ENCODE measurements at regions of chr22 and their contacts with region 1.

Region 1: GRCh38 chr22:38733329-38733723 is 22.5 kb downstream of the SUN2 start:
- DNase-seq: peak; percentile 29 to 60
- ATAC-seq: peak; percentile 72 to 83
- H3K4me3 ChIP-seq: no peak overlapping the region
- H3K27ac ChIP-seq: no peak overlapping the region
- H3K4me1 ChIP-seq: no peaks in the 10 kb centered on the region
- CTCF ChIP-seq: peak; percentile 56
- EP300 ChIP-seq: no peak
- POLR2A ChIP-seq: no peak
- RAD21 ChIP-seq: peak; percentile 49 to 52; a peak in 4 of 5 replicates

Region 2: DNA sequence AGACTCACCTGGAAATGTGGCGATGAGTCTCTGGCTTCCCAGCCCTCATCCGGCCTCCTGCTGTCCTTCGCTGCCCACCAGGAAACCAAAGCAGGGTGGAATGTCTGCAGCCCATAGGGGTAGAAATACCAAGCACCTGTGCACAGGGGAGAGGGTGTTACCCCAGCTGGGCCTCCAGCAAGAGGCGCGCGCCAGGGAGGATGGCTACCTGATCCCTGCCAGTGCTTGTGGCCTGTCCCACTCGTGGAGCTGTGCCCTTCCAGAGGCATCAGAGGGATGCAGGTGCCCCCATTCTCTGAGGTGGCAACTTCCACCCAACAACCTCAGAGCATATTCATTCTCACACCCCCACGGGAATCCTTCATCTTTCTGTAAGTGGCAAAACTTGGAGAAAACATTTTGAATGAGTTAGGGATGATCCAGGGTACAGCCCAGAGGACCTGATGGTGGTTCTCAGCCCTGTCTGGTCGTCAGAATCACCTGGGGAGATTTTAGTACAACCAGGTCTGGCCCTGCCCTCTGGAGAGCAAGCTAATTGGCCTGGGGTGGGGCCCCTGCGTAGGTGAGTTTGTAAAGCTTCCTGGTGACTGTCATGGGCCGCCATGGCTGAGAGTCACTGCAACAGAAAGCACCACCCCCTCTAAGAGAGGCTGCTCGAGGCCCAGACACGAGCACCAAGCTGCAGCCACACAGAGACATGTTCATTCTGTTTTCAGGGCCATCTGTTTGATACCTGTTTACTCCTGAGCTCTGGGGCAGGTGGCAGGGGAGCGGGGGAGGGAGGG is 12.5 kb after region 1 on chr22:
- CTCF ChIA-PET with region 1: interaction called, 27 read pairs
- POLR2A ChIA-PET with region 1: no interaction called
- DNase-seq: no peak
- ATAC-seq: no peak
- H3K4me3 ChIP-seq: no peak overlapping the region
- H3K27ac ChIP-seq: no peak overlapping the region
- H3K4me1 ChIP-seq: no peaks in the 10 kb centered on the region
- CTCF ChIP-seq: no peak
- EP300 ChIP-seq: no peak
- POLR2A ChIP-seq: no peak
- RAD21 ChIP-seq: no peak

Region 3: DNA sequence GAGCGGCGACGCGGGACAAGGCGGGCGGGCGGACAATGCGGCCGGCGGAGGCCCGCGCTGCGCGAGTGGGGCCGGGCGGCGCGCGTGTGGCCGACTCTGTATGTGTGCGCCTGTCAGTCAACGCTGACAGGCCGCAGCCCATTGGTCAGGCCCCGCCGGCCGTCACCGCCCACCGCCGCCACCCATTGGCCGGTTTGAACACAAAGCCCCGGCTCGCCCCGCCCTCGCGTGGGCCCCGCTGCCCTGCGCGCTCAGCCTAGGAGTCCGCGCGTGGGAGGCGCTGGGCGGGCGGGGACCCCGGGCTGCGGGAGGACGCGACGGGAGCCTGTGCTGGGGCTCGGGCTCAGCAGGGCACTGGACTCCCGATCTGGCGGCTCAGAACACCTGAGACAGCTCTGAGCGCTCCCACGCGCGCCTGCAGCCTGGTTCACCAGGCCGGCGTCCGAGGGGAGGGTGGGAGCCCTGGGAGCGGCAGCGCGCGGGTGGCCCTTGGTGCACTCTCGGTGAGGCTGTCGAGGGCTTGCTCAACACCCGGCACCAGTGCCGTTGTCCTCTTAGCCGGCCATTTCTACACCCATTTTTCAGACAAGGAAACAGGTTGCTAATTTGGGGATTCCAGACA is 22.7 kb after region 1 on chr22 and contains the start of gene SUN2:
- CTCF ChIA-PET with region 1: interaction called, 10 read pairs
- POLR2A ChIA-PET with region 1: no interaction called
- DNase-seq: peak; percentile 81 to 84
- ATAC-seq: peak; percentile 89 to 90
- H3K4me3 ChIP-seq: peak within 1 kb of the TSS; percentile 100
- H3K27ac ChIP-seq: peak within 1 kb of the TSS; percentile 99
- H3K4me1 ChIP-seq: peaks cover 22% of the 10 kb centered on the region
- CTCF ChIP-seq: no peak
- EP300 ChIP-seq: no peak
- POLR2A ChIP-seq: peak; percentile 8; the same call in 1 of the 2 replicates
- RAD21 ChIP-seq: no peak
- polyA plus RNA-seq, gene SUN2: 12.6 and 18.4 TPM in 2 replicates

Region 4: DNA sequence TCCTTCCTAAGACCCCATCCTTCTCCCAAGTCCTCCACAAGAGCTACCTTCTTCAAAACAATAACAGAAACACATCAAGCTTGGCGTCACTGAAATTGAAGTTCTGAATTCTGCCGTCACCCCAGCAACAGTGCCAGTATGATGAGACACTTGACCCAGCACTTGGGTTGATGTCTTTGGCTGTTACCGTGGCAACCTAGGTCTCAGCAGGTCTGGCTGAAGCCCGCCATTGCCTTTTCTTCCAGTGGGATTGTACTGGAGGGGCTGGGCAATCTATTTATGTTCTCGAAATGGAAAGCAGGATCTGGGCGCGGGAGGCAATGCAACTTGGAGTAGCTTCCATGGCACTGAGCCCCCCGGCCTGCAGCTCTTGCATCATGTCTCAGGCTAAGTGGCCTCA is 86.7 kb after region 1 on chr22:
- CTCF ChIA-PET with region 1: no interaction called
- POLR2A ChIA-PET with region 1: no interaction called
- DNase-seq: no peak
- ATAC-seq: no peak
- H3K4me3 ChIP-seq: no peak overlapping the region
- H3K27ac ChIP-seq: no peak overlapping the region
- H3K4me1 ChIP-seq: no peaks in the 10 kb centered on the region
- CTCF ChIP-seq: no peak
- EP300 ChIP-seq: no peak
- POLR2A ChIP-seq: no peak
- RAD21 ChIP-seq: no peak

Measured in A549 (cell line).